Naive thymus-derived CD4-positive, alpha-beta T cell (primary cell): ENCODE measurements at regions of chr2 and their contacts with region 1.

Region 1: GRCh38 chr2:186485871-186486650 is at the start of gene ZC3H15:
- DNase-seq: peak; percentile 91 to 97 (median 96)
- ATAC-seq: peak; percentile 98
- H3K4me3 ChIP-seq: peak within 1 kb of the TSS; percentile 95
- H3K4me3 Mint-ChIP-seq: peak within 1 kb of the TSS; percentile 96 to 99 (median 99)
- H3K27ac ChIP-seq: peak within 1 kb of the TSS; percentile 96
- H3K27ac Mint-ChIP-seq: peak within 1 kb of the TSS; percentile 95 to 100 (median 99)
- H3K4me1 ChIP-seq: peaks cover 33 to 36% of the 10 kb centered on the region in 2 donors
- H3K4me1 Mint-ChIP-seq: peaks cover 37 to 86% (median 64%) of the 10 kb centered on the region in 7 donors
- H3K27me3 ChIP-seq: no peaks in the 10 kb centered on the region
- H3K27me3 Mint-ChIP-seq: peaks cover 0 to 2% (median 0%) of the 10 kb centered on the region in 5 donors
- total RNA-seq, gene ZC3H15: 53.4 to 87.4 (median 64.6) TPM

Region 2: GRCh38 chr2:186496401-186496800 is 10.3 kb after region 1 on chr2:
- CTCF ChIA-PET with region 1: no interaction called
- POLR2A ChIA-PET with region 1: interaction called, 4 read pairs
- intact Hi-C with region 1: loop called in 1 of 2 experiments (anchors 1 kb)
- DNase-seq: no peak
- ATAC-seq: no peak
- H3K4me3 ChIP-seq: no peak overlapping the region
- H3K4me3 Mint-ChIP-seq: no peak overlapping the region
- H3K27ac ChIP-seq: no peak overlapping the region
- H3K27ac Mint-ChIP-seq: peak overlapping the region in 1 of 9 donors; percentile 43
- H3K4me1 ChIP-seq: peaks cover 7 to 20% of the 10 kb centered on the region in 2 donors
- H3K4me1 Mint-ChIP-seq: peaks cover 29 to 79% (median 62%) of the 10 kb centered on the region in 7 donors
- H3K27me3 ChIP-seq: no peaks in the 10 kb centered on the region
- H3K27me3 Mint-ChIP-seq: no peaks in the 10 kb centered on the region

Region 3: GRCh38 chr2:186503848-186504606 is 18.0 kb after region 1 on chr2:
- CTCF ChIA-PET with region 1: interaction called, 3 read pairs
- POLR2A ChIA-PET with region 1: interaction called, 6 read pairs
- intact Hi-C with region 1: loop called (anchors 1 to 2 kb)
- DNase-seq: peak in 5 of 9 donors; percentile 17 to 24 (median 18)
- ATAC-seq: peak; percentile 56
- H3K4me3 ChIP-seq: no peak overlapping the region
- H3K4me3 Mint-ChIP-seq: no peak overlapping the region
- H3K27ac ChIP-seq: no peak overlapping the region
- H3K27ac Mint-ChIP-seq: peak overlapping the region in 5 of 9 donors; percentile 4 to 88 (median 53)
- H3K4me1 ChIP-seq: no peaks in the 10 kb centered on the region
- H3K4me1 Mint-ChIP-seq: peaks cover 7 to 30% (median 16%) of the 10 kb centered on the region in 7 donors
- H3K27me3 ChIP-seq: no peaks in the 10 kb centered on the region
- H3K27me3 Mint-ChIP-seq: no peaks in the 10 kb centered on the region

Region 4: GRCh38 chr2:186589612-186590349 is 103.7 kb after region 1 on chr2 and contains the start of gene ITGAV:
- CTCF ChIA-PET with region 1: no interaction called
- POLR2A ChIA-PET with region 1: interaction called, 26 read pairs
- intact Hi-C with region 1: loop called (anchors 1 kb)
- DNase-seq: peak; percentile 61 to 83 (median 79)
- ATAC-seq: peak; percentile 94
- H3K4me3 ChIP-seq: peak within 1 kb of the TSS; percentile 65
- H3K4me3 Mint-ChIP-seq: peak within 1 kb of the TSS; percentile 83 to 96 (median 90)
- H3K27ac ChIP-seq: peak within 1 kb of the TSS; percentile 71
- H3K27ac Mint-ChIP-seq: peak within 1 kb of the TSS; percentile 66 to 90 (median 82)
- H3K4me1 ChIP-seq: peaks cover 8 to 13% of the 10 kb centered on the region in 2 donors
- H3K4me1 Mint-ChIP-seq: peaks cover 15 to 46% (median 33%) of the 10 kb centered on the region in 7 donors
- H3K27me3 ChIP-seq: no peaks in the 10 kb centered on the region
- H3K27me3 Mint-ChIP-seq: peaks cover 0 to 14% (median 8%) of the 10 kb centered on the region in 5 donors
- total RNA-seq, gene ITGAV: 5.0 to 9.7 (median 7.2) TPM

Region 5: DNA sequence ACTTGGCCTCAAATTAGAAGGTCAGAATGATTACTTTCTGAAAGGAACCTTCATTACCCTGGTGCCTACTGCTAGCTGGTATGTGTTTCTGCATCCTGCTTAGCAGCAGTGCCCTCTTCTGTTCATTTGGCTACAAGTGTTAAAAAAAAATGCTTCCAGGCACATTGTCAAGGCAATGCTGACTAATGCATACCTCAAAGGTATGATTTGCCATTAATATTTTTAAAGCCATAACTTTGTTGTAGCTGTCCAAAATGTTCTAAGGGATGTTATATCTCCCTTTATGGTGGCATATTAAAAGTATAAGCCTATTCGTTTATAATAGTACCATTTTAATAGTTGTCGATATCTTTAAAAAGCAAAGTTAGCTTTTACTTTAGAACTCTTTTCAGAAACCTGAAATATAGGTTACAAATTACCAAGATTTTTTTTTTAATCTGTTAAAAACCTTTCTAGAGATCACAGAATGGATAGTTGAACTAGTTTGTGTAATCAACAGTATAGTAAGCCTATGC is 155.8 kb after region 1 on chr2:
- CTCF ChIA-PET with region 1: no interaction called
- POLR2A ChIA-PET with region 1: no interaction called
- intact Hi-C with region 1: loop called in 1 of 2 experiments (anchors 5 kb)
- DNase-seq: peak in 6 of 9 donors; percentile 13 to 54 (median 45)
- ATAC-seq: peak; percentile 73
- H3K4me3 ChIP-seq: no peak overlapping the region
- H3K4me3 Mint-ChIP-seq: no peak overlapping the region
- H3K27ac ChIP-seq: no peak overlapping the region
- H3K27ac Mint-ChIP-seq: peak overlapping the region in 1 of 9 donors; percentile 18
- H3K4me1 ChIP-seq: no peaks in the 10 kb centered on the region
- H3K4me1 Mint-ChIP-seq: peaks cover 0 to 26% (median 0%) of the 10 kb centered on the region in 7 donors
- H3K27me3 ChIP-seq: no peaks in the 10 kb centered on the region
- H3K27me3 Mint-ChIP-seq: no peaks in the 10 kb centered on the region

Region 6: GRCh38 chr2:186695081-186695756 is 209.2 kb after region 1 on chr2:
- CTCF ChIA-PET with region 1: no interaction called
- POLR2A ChIA-PET with region 1: no interaction called
- intact Hi-C with region 1: loop called in 1 of 2 experiments (anchors 1 kb)
- DNase-seq: peak in 1 of 9 donors; percentile 1
- ATAC-seq: no peak
- H3K4me3 ChIP-seq: no peak overlapping the region
- H3K4me3 Mint-ChIP-seq: peak overlapping the region in 9 of 10 donors; percentile 29 to 91 (median 80)
- H3K27ac ChIP-seq: no peak overlapping the region
- H3K27ac Mint-ChIP-seq: no peak overlapping the region
- H3K4me1 ChIP-seq: peaks cover 3 to 4% of the 10 kb centered on the region in 2 donors
- H3K4me1 Mint-ChIP-seq: peaks cover 6 to 12% (median 11%) of the 10 kb centered on the region in 7 donors
- H3K27me3 ChIP-seq: peaks cover 0 to 5% of the 10 kb centered on the region in 2 donors
- H3K27me3 Mint-ChIP-seq: peaks cover 52 to 70% (median 57%) of the 10 kb centered on the region in 5 donors